Gastrocnemius medialis (tissue), 4 donors: ENCODE measurements at regions of chr6 and their contacts with region 1.

Region 1: DNA sequence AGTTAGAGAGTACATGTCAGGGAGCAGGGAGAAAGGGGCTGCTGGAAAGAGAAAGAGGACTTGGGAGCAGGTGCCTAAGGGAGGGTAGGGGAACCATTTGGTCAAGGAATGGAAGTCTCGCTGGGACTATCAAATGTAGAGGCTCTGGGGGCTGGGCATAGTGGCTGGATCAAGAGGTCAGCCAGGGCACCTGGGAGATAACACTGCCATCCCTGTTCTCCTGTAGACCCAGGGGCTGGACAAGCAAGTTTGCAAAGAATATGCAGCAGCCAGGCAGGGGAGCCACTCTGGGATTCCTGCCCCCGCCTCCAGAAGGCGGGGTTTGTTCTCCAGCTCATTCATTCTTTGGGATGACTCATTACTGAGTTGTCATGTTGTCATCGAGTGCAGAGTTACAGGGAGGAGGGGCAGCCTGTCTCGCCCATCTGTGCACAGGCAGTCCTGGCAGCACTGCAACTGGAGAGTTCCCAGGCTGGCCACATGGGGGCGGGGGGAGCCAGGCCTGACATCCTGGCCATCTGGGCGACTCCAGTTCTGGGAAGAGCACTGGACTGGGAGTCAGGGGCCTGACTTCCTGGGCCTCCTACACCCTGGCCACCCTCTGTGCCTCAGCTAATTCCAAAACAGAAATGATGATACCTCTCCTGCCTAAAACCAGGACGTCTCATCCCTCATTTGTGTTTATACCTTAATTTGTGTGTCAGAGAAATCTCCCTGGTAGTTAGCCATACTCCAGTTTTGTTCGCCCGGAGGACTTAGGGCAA is 28.2 kb upstream of the ZFAND3 start:
- DNase-seq: peak; percentile 91 to 96
- ATAC-seq: peak; percentile 85 to 91
- H3K4me3 ChIP-seq: no peak overlapping the region
- H3K27ac ChIP-seq: peak overlapping the region in 3 of 4 donors; percentile 23 to 65 (median 48)
- H3K4me1 ChIP-seq: peaks cover 29 to 37% of the 10 kb centered on the region in 2 donors
- H3K27me3 ChIP-seq: no peaks in the 10 kb centered on the region
- CTCF ChIP-seq: peak; percentile 95 to 98 (median 97)
- POLR2A ChIP-seq: no peak

Region 2: DNA sequence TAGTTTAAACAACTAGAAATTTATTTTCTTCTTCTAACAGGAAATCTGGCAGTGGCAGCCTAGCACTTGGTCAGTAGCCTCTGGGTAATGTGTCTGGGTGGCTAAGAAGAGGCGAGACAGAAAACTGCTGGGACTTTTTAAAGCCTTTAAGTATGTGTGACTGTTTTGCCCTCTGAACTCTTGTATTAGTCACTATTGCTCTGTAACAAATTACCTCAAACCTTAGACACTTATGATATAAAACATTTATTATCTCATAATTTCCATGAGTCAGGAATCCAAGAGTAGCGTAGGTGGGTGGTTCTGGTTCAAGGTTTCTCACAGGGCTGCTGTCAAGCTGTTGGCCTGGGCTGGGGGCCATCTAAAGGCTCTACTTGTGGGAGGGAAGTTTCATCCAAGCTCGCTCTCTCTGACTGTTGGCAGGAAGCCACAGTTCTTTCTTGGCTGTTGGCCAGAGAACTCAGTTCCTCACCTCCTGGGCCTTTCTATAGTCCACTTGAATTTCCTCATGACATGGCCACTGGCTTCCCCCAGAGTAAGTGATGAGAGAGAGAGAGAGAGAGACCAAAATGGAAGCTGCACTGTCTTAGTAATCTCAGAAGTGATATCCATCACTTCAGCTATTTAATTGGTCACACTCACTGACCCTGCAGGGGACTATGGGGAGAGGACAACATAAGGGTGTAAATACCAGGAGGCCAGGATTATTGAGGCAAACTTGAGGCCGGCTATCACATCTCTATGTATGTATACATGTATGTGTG is 551.2 kb before region 1 on chr6:
- in situ Hi-C with region 1: no loop called
- intact Hi-C with region 1: no loop called
- DNase-seq: peak; percentile 49 to 83
- ATAC-seq: peak; percentile 23 to 29
- H3K4me3 ChIP-seq: no peak overlapping the region
- H3K27ac ChIP-seq: peak overlapping the region; percentile 49 to 74 (median 67)
- H3K4me1 ChIP-seq: peaks cover 37 to 40% of the 10 kb centered on the region in 2 donors
- H3K27me3 ChIP-seq: no peaks in the 10 kb centered on the region
- CTCF ChIP-seq: no peak
- POLR2A ChIP-seq: no peak

Region 3: DNA sequence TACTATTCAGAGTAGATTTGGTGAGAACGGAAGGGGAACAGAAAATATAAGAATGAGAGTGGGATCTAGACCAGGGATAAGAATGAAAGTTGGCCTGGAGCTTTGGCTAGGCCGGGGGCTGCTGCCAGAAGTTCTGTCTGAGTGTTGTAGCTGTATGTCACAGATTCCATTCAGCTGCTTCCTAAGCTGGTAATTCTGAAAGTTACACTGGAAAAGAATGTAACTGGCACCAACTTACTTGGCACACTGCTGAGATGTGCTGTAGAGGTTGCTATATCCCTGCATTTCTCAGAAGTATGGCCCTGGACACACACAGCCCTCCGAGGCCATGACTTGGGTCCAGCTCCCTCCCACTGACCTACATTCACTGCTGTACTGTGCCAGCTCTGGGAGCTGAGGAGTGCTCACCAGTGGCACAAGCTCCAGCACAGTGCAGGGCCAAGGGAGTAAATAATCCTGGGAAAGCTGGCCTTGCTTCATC is 507.6 kb before region 1 on chr6:
- in situ Hi-C with region 1: no loop called
- intact Hi-C with region 1: loop called (anchors 10 kb)
- DNase-seq: peak; percentile 90 to 95
- ATAC-seq: peak; percentile 75 to 76
- H3K4me3 ChIP-seq: peak overlapping the region in 1 of 4 donors; percentile 8
- H3K27ac ChIP-seq: peak overlapping the region; percentile 92 to 97 (median 94)
- H3K4me1 ChIP-seq: peaks cover 58% of the 10 kb centered on the region in 2 donors
- H3K27me3 ChIP-seq: no peaks in the 10 kb centered on the region
- CTCF ChIP-seq: no peak
- POLR2A ChIP-seq: no peak

Region 4: GRCh38 chr6:37860226-37860839 is 69.0 kb after region 1 on chr6:
- in situ Hi-C with region 1: no loop called
- intact Hi-C with region 1: loop called (anchors 2 kb)
- DNase-seq: no peak
- ATAC-seq: peak in 1 of 2 donors; percentile 29
- H3K4me3 ChIP-seq: no peak overlapping the region
- H3K27ac ChIP-seq: no peak overlapping the region
- H3K4me1 ChIP-seq: peaks cover 37 to 39% of the 10 kb centered on the region in 2 donors
- H3K27me3 ChIP-seq: no peaks in the 10 kb centered on the region
- CTCF ChIP-seq: peak; percentile 26 to 57 (median 49)
- POLR2A ChIP-seq: no peak

Region 5: DNA sequence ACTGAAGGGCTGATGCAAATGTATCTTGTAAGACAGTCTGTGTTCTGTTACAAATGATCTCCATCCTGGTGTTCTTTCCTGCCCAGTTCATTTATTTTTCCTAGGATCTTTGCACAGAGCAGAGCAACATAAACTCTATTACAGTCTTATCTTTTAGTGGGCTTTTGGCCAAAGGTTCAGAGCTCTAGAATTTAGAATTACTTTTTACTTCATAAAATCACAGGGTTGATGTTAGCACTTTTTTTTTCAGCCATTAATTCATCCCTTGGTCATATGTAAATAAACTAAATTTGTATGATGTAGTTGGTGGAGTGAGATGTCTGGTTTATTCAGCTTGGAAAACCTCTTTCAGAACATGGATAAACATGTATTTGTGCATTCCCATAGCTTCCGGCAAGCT is 210.0 kb after region 1 on chr6:
- in situ Hi-C with region 1: loop called in 1 of 4 experiments (anchors 10 kb)
- intact Hi-C with region 1: no loop called
- DNase-seq: no peak
- ATAC-seq: no peak
- H3K4me3 ChIP-seq: no peak overlapping the region
- H3K27ac ChIP-seq: no peak overlapping the region
- H3K4me1 ChIP-seq: peaks cover 14 to 17% of the 10 kb centered on the region in 2 donors
- H3K27me3 ChIP-seq: no peaks in the 10 kb centered on the region
- CTCF ChIP-seq: no peak
- POLR2A ChIP-seq: no peak

Region 6: GRCh38 chr6:38169977-38170526 is 378.7 kb after region 1 on chr6:
- in situ Hi-C with region 1: no loop called
- intact Hi-C with region 1: loop called (anchors 10 kb)
- DNase-seq: no peak
- ATAC-seq: no peak
- H3K4me3 ChIP-seq: no peak overlapping the region
- H3K27ac ChIP-seq: no peak overlapping the region
- H3K4me1 ChIP-seq: no peaks in the 10 kb centered on the region
- H3K27me3 ChIP-seq: no peaks in the 10 kb centered on the region
- CTCF ChIP-seq: no peak
- POLR2A ChIP-seq: no peak